CD8-positive, alpha-beta T cell (primary cell): ENCODE measurements at regions of chr6 and their contacts with region 1.

Region 1: GRCh38 chr6:30238174-30238795 is 25.1 kb upstream of the TRIM26 start:
- DNase-seq: peak in 5 of 9 experiments; percentile 18 to 69 (median 31)
- ATAC-seq: peak; percentile 63
- H3K4me3 ChIP-seq: no peak overlapping the region
- H3K4me3 Mint-ChIP-seq: no peak overlapping the region
- H3K27ac ChIP-seq: no peak overlapping the region
- H3K27ac Mint-ChIP-seq: no peak overlapping the region
- H3K4me1 ChIP-seq: no peaks in the 10 kb centered on the region
- H3K4me1 Mint-ChIP-seq: no peaks in the 10 kb centered on the region
- H3K27me3 ChIP-seq: no peaks in the 10 kb centered on the region
- H3K27me3 Mint-ChIP-seq: peaks cover 32% of the 10 kb centered on the region
- CTCF ChIP-seq: peak; percentile 40

Region 2: GRCh38 chr6:30227763-30228487 is 10.4 kb before region 1 on chr6:
- CTCF ChIA-PET with region 1: interaction called, 10 read pairs
- POLR2A ChIA-PET with region 1: no interaction called
- intact Hi-C with region 1: no loop called
- DNase-seq: peak in 3 of 9 experiments; percentile 29 to 81 (median 64)
- ATAC-seq: peak; percentile 79
- H3K4me3 ChIP-seq: peak overlapping the region in 1 of 2 experiments; percentile 21
- H3K4me3 Mint-ChIP-seq: peak overlapping the region; percentile 75
- H3K27ac ChIP-seq: peak overlapping the region in 1 of 2 experiments; percentile 79
- H3K27ac Mint-ChIP-seq: peak overlapping the region; percentile 82
- H3K4me1 ChIP-seq: no peaks in the 10 kb centered on the region
- H3K4me1 Mint-ChIP-seq: peaks cover 14% of the 10 kb centered on the region
- H3K27me3 ChIP-seq: no peaks in the 10 kb centered on the region
- H3K27me3 Mint-ChIP-seq: no peaks in the 10 kb centered on the region
- CTCF ChIP-seq: no peak

Region 3: DNA sequence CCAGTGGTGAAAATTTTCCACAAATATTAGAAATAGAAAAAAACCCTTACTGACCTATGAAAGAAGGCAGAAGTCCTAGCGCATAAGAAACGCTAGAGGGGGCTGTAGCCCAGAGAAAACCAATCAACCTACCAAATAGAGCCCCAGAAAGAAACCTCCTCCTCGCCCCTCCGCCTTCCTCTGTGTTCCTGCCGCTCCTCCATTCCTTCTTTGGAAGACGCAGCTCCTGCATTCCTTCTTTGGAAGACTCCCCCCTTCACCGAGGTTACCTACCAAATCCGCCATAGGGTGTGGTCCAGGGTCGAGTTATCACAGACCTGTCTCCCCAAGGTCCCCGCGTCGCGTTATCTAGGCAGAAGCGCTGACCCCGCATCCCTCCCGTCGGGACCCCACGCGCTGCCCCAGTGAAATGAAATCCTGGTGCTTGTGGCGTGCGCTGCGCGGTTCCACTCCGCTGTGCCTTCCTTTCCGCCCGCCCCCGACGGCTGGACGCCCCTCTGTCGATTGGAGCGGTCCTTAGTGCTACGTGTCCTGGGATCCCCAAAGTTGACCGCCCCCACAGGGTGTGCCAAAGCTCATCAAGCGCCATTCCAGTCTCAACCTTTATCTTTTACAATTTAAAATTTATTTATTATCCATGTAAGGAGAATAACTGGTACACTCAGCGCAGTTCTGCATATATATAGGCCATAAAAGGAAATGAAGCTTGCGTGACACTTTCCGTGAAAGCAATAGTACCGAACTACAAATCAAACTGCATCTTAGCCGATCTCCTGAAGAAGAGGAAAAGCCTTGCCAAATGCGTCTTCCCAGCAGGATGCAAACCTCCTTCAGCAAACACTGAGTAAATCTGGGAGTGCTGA is 119.6 kb after region 1 on chr6:
- CTCF ChIA-PET with region 1: no interaction called
- POLR2A ChIA-PET with region 1: no interaction called
- intact Hi-C with region 1: loop called in 1 of 2 experiments (anchors 2 kb)
- DNase-seq: peak in 8 of 9 experiments; percentile 16 to 81 (median 56)
- ATAC-seq: peak; percentile 88
- H3K4me3 ChIP-seq: peak overlapping the region; percentile 41 to 47
- H3K4me3 Mint-ChIP-seq: peak overlapping the region; percentile 87
- H3K27ac ChIP-seq: no peak overlapping the region
- H3K27ac Mint-ChIP-seq: no peak overlapping the region
- H3K4me1 ChIP-seq: peaks cover 4% of the 10 kb centered on the region
- H3K4me1 Mint-ChIP-seq: peaks cover 4% of the 10 kb centered on the region
- H3K27me3 ChIP-seq: peaks cover 0 to 10% of the 10 kb centered on the region in 2 experiments
- H3K27me3 Mint-ChIP-seq: peaks cover 46% of the 10 kb centered on the region
- CTCF ChIP-seq: peak; percentile 68

Region 4: DNA sequence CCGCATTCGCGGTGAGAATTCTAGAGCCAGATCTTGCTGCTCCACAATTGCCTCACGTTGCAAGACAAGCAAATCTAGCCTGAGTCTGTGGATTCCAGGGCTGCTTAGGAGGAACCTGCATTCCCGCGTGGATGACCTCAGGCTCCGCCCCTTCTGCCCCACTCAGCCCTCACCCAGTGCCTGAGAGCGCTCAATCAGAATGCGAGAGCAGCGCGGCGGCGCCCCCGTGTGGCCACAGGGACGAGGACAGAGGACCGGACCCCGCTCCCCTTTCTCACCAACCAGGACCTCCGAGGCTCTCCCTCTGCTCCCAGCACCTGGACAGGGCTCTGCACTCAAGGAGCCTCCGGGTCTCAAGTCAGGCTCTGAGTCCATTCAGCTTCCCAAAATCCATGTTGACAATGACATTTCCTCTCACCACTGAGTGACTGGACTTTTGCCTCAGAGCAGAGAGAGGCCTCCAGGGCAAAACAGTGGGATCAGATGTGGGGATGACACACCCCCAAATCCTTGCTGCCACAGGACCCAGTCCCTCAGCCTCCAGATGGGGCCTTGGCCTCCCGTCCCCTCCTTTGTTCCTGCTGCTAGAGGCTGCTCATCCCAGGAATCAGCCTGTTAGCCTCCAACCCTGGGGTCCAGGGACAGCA is 158.7 kb after region 1 on chr6:
- CTCF ChIA-PET with region 1: interaction called, 50 read pairs
- POLR2A ChIA-PET with region 1: interaction called, 3 read pairs
- intact Hi-C with region 1: loop called (anchors 1 kb)
- DNase-seq: peak; percentile 65 to 92 (median 87)
- ATAC-seq: peak; percentile 99
- H3K4me3 ChIP-seq: no peak overlapping the region
- H3K4me3 Mint-ChIP-seq: no peak overlapping the region
- H3K27ac ChIP-seq: no peak overlapping the region
- H3K27ac Mint-ChIP-seq: no peak overlapping the region
- H3K4me1 ChIP-seq: peaks cover 4% of the 10 kb centered on the region
- H3K4me1 Mint-ChIP-seq: peaks cover 4% of the 10 kb centered on the region
- H3K27me3 ChIP-seq: peaks cover 0 to 10% of the 10 kb centered on the region in 2 experiments
- H3K27me3 Mint-ChIP-seq: peaks cover 26% of the 10 kb centered on the region
- CTCF ChIP-seq: peak; percentile 94

Region 5: GRCh38 chr6:30453508-30454116 is 215.3 kb after region 1 on chr6:
- CTCF ChIA-PET with region 1: no interaction called
- POLR2A ChIA-PET with region 1: no interaction called
- intact Hi-C with region 1: no loop called
- DNase-seq: peak; percentile 71 to 93 (median 87)
- ATAC-seq: peak; percentile 83
- H3K4me3 ChIP-seq: peak overlapping the region in 1 of 2 experiments; percentile 41
- H3K4me3 Mint-ChIP-seq: peak overlapping the region; percentile 49
- H3K27ac ChIP-seq: no peak overlapping the region
- H3K27ac Mint-ChIP-seq: no peak overlapping the region
- H3K4me1 ChIP-seq: peaks cover 42% of the 10 kb centered on the region
- H3K4me1 Mint-ChIP-seq: peaks cover 41% of the 10 kb centered on the region
- H3K27me3 ChIP-seq: peaks cover 38 to 64% of the 10 kb centered on the region in 2 experiments
- H3K27me3 Mint-ChIP-seq: peaks cover 68% of the 10 kb centered on the region
- CTCF ChIP-seq: peak; percentile 63